RWPE1 (cell line): ENCODE measurements at regions of chr3 and their contacts with region 1.

Region 1: DNA sequence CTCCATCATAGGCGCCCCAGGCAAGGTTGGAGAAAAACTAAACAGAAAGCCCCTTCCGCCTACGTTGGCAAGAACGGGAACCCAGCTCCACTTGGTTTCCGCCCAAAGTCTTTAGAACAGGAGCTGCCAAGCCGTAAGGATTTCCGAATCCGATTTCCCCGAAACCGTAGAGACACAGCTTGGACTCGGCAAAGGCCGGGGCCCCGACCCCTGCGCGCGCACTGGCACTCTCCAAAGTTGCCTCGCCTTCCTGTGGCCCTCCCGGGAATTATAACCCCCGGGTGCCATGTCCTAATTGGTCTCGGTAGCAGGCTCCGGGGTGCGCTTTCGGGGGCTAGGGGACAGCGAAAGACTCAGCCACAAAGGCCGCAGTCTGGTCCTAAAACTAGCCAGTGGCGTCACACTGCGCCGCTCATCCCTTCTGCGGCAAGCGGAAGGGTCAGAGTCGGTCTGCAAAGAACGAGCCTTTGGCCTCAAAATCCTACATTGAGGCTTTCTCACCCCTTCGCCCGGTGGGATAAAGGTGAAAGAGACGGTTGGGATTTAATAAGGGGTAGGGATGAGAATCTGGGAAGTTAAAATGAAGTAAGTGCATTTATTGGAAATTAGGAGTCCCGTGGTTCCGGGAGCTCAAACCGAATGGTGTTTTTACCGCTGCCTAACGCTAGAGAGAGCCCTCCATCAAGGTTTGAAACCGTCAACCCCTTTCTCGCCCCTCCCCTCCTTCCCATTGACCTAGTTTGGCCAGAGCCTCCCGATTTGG is 6.8 kb downstream of the BCL6 start:
- DNase-seq: peak; percentile 92
- H3K27ac ChIP-seq: peak overlapping the region; percentile 97
- CTCF ChIP-seq: peak; percentile 73

Region 2: DNA sequence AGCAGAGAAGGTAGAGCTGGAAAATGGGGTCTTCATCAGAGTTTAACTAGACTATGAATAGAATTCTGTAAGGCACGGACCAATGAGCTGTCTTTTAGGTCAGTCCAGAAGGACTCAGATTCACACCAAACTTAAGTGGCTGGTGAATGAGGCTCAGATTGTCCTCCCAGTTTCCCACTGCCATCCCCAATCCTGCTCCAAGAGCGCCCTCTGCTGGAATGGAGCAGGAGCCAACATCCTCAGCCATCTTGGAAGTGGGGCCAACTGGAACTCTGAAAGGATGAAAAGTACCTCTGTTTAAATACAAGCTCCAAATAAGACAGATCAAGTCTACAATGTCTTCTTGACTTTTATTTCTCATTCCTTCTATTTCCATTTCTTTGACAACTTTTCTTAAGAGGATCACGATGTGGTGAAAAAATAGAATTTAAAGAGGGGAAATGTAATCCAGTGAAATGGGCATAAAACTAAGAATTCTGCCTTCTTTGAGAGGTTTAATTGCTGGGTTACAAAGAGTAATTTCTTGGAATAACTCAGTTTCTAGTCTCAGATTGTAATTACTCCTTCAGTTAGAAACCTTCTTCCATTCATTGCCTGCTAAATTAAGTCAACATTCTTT is 1216.2 kb after region 1 on chr3:
- CTCF ChIA-PET with region 1: interaction called, 87 read pairs
- POLR2A ChIA-PET with region 1: no interaction called
- DNase-seq: peak; percentile 81
- H3K27ac ChIP-seq: no peak overlapping the region
- CTCF ChIP-seq: peak; percentile 81

Region 3: GRCh38 chr3:189041482-189042090 is 1303.1 kb after region 1 on chr3:
- CTCF ChIA-PET with region 1: interaction called, 18 read pairs
- POLR2A ChIA-PET with region 1: no interaction called
- DNase-seq: peak; percentile 31
- H3K27ac ChIP-seq: no peak overlapping the region
- CTCF ChIP-seq: peak; percentile 31